ENCODE measurements at regions of chrX and their contacts with region 1.

Region 1: GRCh38 chrX:20382518-20383297 is 116.0 kb upstream of the RPS6KA3 start:
- DNase-seq: peak in 1 of 2 experiments; percentile 52
- H3K4me3 ChIP-seq: no peak overlapping the region
- H3K4me3 Mint-ChIP-seq: no peak overlapping the region
- H3K27ac Mint-ChIP-seq: no peak overlapping the region
- H3K4me1 ChIP-seq: peaks cover 31% of the 10 kb centered on the region
- H3K4me1 Mint-ChIP-seq: peaks cover 27% of the 10 kb centered on the region
- H3K27me3 ChIP-seq: no peaks in the 10 kb centered on the region
- H3K27me3 Mint-ChIP-seq: no peaks in the 10 kb centered on the region
- CTCF ChIP-seq: no peak

Region 2: DNA sequence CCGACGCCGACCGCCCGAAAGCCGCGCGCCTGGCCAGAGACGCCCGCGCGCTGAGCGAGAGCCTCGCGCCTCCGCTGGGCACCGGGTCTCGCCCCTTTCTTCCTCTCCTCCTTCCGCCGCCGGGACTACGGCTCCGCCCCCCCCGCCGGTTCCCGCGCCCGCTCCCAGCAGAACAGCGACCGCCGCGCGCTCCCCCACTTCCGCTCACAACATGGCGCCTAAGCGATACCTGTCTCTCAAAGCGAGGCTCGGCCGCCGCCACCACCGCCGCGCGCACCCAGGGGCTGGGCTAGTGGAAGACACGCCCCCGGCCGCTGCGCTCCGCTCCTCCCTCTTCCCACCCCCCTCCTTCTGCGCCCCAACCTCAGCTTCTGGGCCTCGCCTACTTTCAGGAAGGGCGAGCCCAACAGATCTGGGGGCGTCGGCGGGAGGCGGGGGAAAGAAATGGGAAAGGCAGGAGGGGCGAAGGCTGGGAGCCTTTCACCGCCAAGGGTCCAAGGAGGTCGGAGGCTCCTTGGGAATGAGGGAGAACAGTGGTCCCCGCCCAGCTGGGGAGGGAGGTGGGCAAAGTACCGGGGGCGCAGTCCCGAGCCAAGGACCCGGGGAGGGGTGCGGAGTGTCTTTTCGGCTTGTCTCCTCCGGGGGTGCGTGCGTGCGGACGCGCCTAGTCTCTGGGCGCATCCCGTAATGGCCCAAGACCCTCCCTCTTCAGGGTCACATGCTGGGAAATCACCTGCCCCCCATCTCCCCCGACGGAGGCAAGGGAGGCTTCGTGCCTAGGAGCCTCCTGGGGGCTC is 115.7 kb before region 1 on chrX and contains the start of gene RPS6KA3:
- CTCF ChIA-PET with region 1: no interaction called
- POLR2A ChIA-PET with region 1: no interaction called
- intact Hi-C with region 1: loop called (anchors 5 kb)
- DNase-seq: peak; percentile 89 to 92
- H3K4me3 ChIP-seq: peak within 1 kb of the TSS; percentile 77
- H3K4me3 Mint-ChIP-seq: peak within 1 kb of the TSS; percentile 96
- H3K27ac Mint-ChIP-seq: peak within 1 kb of the TSS; percentile 93
- H3K4me1 ChIP-seq: peaks cover 28% of the 10 kb centered on the region
- H3K4me1 Mint-ChIP-seq: peaks cover 14% of the 10 kb centered on the region
- H3K27me3 ChIP-seq: no peaks in the 10 kb centered on the region
- H3K27me3 Mint-ChIP-seq: no peaks in the 10 kb centered on the region
- CTCF ChIP-seq: no peak
- total RNA-seq, gene RPS6KA3: 93.2 and 104 TPM in 2 replicates

Region 3: DNA sequence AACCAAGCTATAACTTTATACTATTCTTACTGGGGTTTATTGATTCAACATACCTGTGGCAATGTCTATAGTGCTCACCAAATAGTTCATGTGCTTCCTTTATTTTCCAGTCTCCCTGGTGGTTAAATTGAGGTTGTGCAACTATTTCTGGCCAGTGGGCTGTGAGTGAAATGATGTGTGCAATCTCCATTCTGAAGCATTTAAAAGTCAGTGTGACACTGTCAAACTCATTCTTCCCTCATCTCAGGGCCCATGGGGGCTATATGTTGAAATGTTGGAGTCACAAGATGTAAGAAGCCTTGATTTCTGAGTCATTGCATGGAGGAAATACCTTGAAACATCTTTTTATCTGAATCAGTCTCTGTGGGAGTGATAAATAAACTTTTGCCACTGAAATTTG is 298.3 kb after region 1 on chrX:
- CTCF ChIA-PET with region 1: no interaction called
- POLR2A ChIA-PET with region 1: no interaction called
- intact Hi-C with region 1: no loop called
- DNase-seq: no peak
- H3K4me3 ChIP-seq: no peak overlapping the region
- H3K4me3 Mint-ChIP-seq: no peak overlapping the region
- H3K27ac Mint-ChIP-seq: no peak overlapping the region
- H3K4me1 ChIP-seq: no peaks in the 10 kb centered on the region
- H3K4me1 Mint-ChIP-seq: no peaks in the 10 kb centered on the region
- H3K27me3 ChIP-seq: no peaks in the 10 kb centered on the region
- H3K27me3 Mint-ChIP-seq: no peaks in the 10 kb centered on the region
- CTCF ChIP-seq: no peak